ENCODE measurements at regions of chr15 and their contacts with region 1.

Region 1: GRCh38 chr15:89358755-89359439 is 24.3 kb upstream of the POLG start:
- DNase-seq: peak; percentile 58 to 92 (median 77)
- ATAC-seq: peak; percentile 89
- H3K4me3 ChIP-seq: peak overlapping the region; percentile 54
- H3K4me3 Mint-ChIP-seq: peak overlapping the region; percentile 80
- H3K27ac ChIP-seq: no peak overlapping the region
- H3K27ac Mint-ChIP-seq: no peak overlapping the region
- H3K4me1 ChIP-seq: peaks cover 37% of the 10 kb centered on the region
- H3K4me1 Mint-ChIP-seq: peaks cover 8% of the 10 kb centered on the region
- H3K27me3 ChIP-seq: peaks cover 82 to 92% of the 10 kb centered on the region in 2 experiments
- H3K27me3 Mint-ChIP-seq: peaks cover 83% of the 10 kb centered on the region
- CTCF ChIP-seq: peak; percentile 99

Region 2: GRCh38 chr15:89206908-89207331 is 152.0 kb before region 1 on chr15:
- CTCF ChIA-PET with region 1: interaction called, 11 read pairs
- POLR2A ChIA-PET with region 1: no interaction called
- intact Hi-C with region 1: no loop called
- DNase-seq: peak; percentile 45 to 83 (median 63)
- ATAC-seq: peak; percentile 92
- H3K4me3 ChIP-seq: no peak overlapping the region
- H3K4me3 Mint-ChIP-seq: no peak overlapping the region
- H3K27ac ChIP-seq: no peak overlapping the region
- H3K27ac Mint-ChIP-seq: no peak overlapping the region
- H3K4me1 ChIP-seq: peaks cover 28% of the 10 kb centered on the region
- H3K4me1 Mint-ChIP-seq: peaks cover 24% of the 10 kb centered on the region
- H3K27me3 ChIP-seq: no peaks in the 10 kb centered on the region
- H3K27me3 Mint-ChIP-seq: no peaks in the 10 kb centered on the region
- CTCF ChIP-seq: peak; percentile 98

Region 3: GRCh38 chr15:89342840-89343239 is 16.1 kb before region 1 on chr15:
- CTCF ChIA-PET with region 1: interaction called, 16 read pairs
- POLR2A ChIA-PET with region 1: no interaction called
- intact Hi-C with region 1: no loop called
- DNase-seq: no peak
- ATAC-seq: no peak
- H3K4me3 ChIP-seq: no peak overlapping the region
- H3K4me3 Mint-ChIP-seq: no peak overlapping the region
- H3K27ac ChIP-seq: no peak overlapping the region
- H3K27ac Mint-ChIP-seq: no peak overlapping the region
- H3K4me1 ChIP-seq: no peaks in the 10 kb centered on the region
- H3K4me1 Mint-ChIP-seq: no peaks in the 10 kb centered on the region
- H3K27me3 ChIP-seq: no peaks in the 10 kb centered on the region
- H3K27me3 Mint-ChIP-seq: peaks cover 5% of the 10 kb centered on the region
- CTCF ChIP-seq: no peak

Region 4: DNA sequence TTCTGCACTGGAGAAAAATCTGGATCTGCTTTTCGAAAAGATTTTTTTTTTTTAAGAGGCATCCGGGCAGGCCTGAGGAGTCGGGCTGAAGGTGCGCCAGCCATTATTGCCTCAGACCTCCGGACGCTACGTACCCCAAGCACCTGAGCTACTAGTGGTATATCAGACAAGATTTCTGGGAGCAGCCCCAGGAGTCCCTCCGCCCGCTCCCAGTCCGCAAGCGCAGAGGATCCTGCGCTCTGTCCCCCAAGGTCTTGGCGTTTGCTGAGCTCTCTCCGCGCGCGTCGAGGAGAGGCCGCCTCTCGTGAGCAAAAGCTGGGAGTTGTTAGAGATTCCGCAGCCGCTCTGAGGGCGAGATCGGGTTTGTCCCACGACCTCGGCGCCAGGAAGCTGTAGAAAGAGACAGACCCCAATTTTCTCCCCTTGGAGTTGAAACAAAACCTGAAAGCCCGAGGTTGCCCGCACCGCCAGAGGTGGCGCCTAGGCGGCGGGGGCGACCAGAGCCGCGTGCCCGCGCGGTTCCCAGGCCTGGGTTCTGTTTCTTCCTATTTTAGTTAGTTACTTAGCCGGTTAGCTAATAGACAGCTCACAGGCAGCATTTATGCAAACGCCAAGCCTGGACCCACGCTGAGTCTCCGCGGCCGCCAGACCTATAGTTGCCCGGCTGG is 48.2 kb after region 1 on chr15:
- CTCF ChIA-PET with region 1: interaction called, 13 read pairs
- POLR2A ChIA-PET with region 1: no interaction called
- intact Hi-C with region 1: loop called in 1 of 2 experiments (anchors 5 kb)
- DNase-seq: peak in 2 of 14 experiments; percentile 39 to 41
- ATAC-seq: no peak
- H3K4me3 ChIP-seq: no peak overlapping the region
- H3K4me3 Mint-ChIP-seq: peak overlapping the region; percentile 69
- H3K27ac ChIP-seq: no peak overlapping the region
- H3K27ac Mint-ChIP-seq: no peak overlapping the region
- H3K4me1 ChIP-seq: peaks cover 60% of the 10 kb centered on the region
- H3K4me1 Mint-ChIP-seq: peaks cover 44% of the 10 kb centered on the region
- H3K27me3 ChIP-seq: peaks cover 95 to 99% of the 10 kb centered on the region in 2 experiments
- H3K27me3 Mint-ChIP-seq: peaks cover 100% of the 10 kb centered on the region
- CTCF ChIP-seq: no peak

Region 5: GRCh38 chr15:89430530-89431341 is 71.8 kb after region 1 on chr15:
- CTCF ChIA-PET with region 1: interaction called, 35 read pairs
- POLR2A ChIA-PET with region 1: interaction called, 6 read pairs
- intact Hi-C with region 1: loop called (anchors 1 kb)
- DNase-seq: peak; percentile 71 to 95 (median 88)
- ATAC-seq: peak; percentile 94
- H3K4me3 ChIP-seq: peak overlapping the region; percentile 56
- H3K4me3 Mint-ChIP-seq: peak overlapping the region; percentile 68
- H3K27ac ChIP-seq: no peak overlapping the region
- H3K27ac Mint-ChIP-seq: no peak overlapping the region
- H3K4me1 ChIP-seq: peaks cover 9% of the 10 kb centered on the region
- H3K4me1 Mint-ChIP-seq: no peaks in the 10 kb centered on the region
- H3K27me3 ChIP-seq: peaks cover 2 to 11% of the 10 kb centered on the region in 2 experiments
- H3K27me3 Mint-ChIP-seq: peaks cover 31% of the 10 kb centered on the region
- CTCF ChIP-seq: peak; percentile 97